CD8-positive, alpha-beta T cell (primary cell): ENCODE measurements at regions of chr20 and their contacts with region 1.

Region 1: GRCh38 chr20:20360464-20360863 is 7.4 kb upstream of the INSM1 start:
- DNase-seq: peak in 4 of 9 experiments; percentile 4 to 62 (median 30)
- ATAC-seq: peak; percentile 46
- H3K4me3 ChIP-seq: peak overlapping the region in 1 of 2 experiments; percentile 12
- H3K4me3 Mint-ChIP-seq: peak overlapping the region; percentile 30
- H3K27ac ChIP-seq: no peak overlapping the region
- H3K27ac Mint-ChIP-seq: no peak overlapping the region
- H3K4me1 ChIP-seq: peaks cover 6% of the 10 kb centered on the region
- H3K4me1 Mint-ChIP-seq: peaks cover 35% of the 10 kb centered on the region
- H3K27me3 ChIP-seq: peaks cover 0 to 12% of the 10 kb centered on the region in 2 experiments
- H3K27me3 Mint-ChIP-seq: peaks cover 36% of the 10 kb centered on the region
- CTCF ChIP-seq: peak; percentile 46

Region 2: DNA sequence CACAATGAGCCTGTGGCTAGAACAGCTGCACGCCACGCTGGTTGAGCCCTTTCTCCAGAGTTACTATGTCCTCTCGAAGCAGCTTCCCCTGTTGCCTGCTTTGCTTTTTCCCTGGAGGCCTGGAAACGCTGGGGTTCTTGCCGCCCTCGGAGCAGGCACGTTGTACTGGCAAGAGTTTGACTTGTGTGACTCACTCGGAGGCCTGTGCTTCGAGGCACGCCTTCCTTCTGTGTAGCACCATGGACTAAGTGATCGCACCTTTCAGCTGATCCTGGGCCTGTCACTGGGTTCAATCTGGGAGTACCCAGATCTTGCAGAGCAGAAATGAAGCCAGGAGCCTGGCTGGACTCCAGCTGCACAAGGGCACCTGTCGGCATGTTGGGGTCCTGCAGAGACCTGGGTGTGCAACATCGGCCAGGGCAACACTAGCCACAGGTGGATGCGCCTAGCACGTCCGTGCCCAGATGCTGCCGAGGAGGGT is 12.7 kb after region 1 on chr20:
- CTCF ChIA-PET with region 1: no interaction called
- POLR2A ChIA-PET with region 1: no interaction called
- intact Hi-C with region 1: no loop called
- DNase-seq: no peak
- ATAC-seq: no peak
- H3K4me3 ChIP-seq: no peak overlapping the region
- H3K4me3 Mint-ChIP-seq: no peak overlapping the region
- H3K27ac ChIP-seq: no peak overlapping the region
- H3K27ac Mint-ChIP-seq: no peak overlapping the region
- H3K4me1 ChIP-seq: no peaks in the 10 kb centered on the region
- H3K4me1 Mint-ChIP-seq: peaks cover 6% of the 10 kb centered on the region
- H3K27me3 ChIP-seq: peaks cover 7 to 8% of the 10 kb centered on the region in 2 experiments
- H3K27me3 Mint-ChIP-seq: peaks cover 47% of the 10 kb centered on the region
- CTCF ChIP-seq: no peak

Region 3: DNA sequence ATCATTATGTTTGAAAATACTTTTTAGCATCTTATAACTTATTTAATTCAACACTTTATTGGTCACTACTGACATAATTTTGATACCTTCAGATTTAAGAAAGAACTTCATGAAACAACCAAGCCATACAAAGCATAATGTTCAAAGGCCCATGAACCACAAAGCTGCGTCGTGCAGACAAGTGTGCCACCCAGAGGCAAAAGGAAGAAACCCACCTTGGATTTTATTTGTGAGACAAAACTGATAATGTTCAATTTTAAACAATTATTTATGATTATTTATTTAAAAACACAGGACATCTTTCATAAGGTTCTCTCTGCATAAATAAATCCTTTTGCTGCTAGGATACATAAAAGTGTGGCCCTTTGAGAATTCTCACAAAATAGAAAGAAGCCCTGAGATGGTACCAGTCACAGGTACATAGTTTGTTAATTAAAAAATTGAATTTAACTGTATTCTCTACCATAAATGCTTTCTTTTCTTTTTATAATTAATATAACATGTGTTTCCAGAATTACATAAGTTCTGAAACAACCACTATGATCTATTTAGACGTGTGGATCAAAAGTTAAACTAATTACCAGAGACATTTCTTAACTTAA is 208.2 kb after region 1 on chr20:
- CTCF ChIA-PET with region 1: no interaction called
- POLR2A ChIA-PET with region 1: no interaction called
- intact Hi-C with region 1: loop called in 1 of 2 experiments (anchors 2 kb)
- DNase-seq: peak in 3 of 9 experiments; percentile 15 to 52 (median 39)
- ATAC-seq: no peak
- H3K4me3 ChIP-seq: no peak overlapping the region
- H3K4me3 Mint-ChIP-seq: no peak overlapping the region
- H3K27ac ChIP-seq: no peak overlapping the region
- H3K27ac Mint-ChIP-seq: no peak overlapping the region
- H3K4me1 ChIP-seq: no peaks in the 10 kb centered on the region
- H3K4me1 Mint-ChIP-seq: no peaks in the 10 kb centered on the region
- H3K27me3 ChIP-seq: no peaks in the 10 kb centered on the region
- H3K27me3 Mint-ChIP-seq: no peaks in the 10 kb centered on the region
- CTCF ChIP-seq: peak; percentile 59